Activated naive CD4-positive, alpha-beta T cell treated with anti-CD3 and anti-CD28 coated beads for 36 hours (primary cell): ENCODE measurements at regions of chr12 and their contacts with region 1.

Region 1: GRCh38 chr12:45130881-45131281 is 80.0 kb upstream of the DBX2 start:
- DNase-seq: peak; percentile 72
- H3K4me3 Mint-ChIP-seq: no peak overlapping the region
- H3K27ac Mint-ChIP-seq: no peak overlapping the region
- H3K4me1 Mint-ChIP-seq: no peaks in the 10 kb centered on the region
- H3K27me3 Mint-ChIP-seq: peaks cover 10% of the 10 kb centered on the region

Region 2: DNA sequence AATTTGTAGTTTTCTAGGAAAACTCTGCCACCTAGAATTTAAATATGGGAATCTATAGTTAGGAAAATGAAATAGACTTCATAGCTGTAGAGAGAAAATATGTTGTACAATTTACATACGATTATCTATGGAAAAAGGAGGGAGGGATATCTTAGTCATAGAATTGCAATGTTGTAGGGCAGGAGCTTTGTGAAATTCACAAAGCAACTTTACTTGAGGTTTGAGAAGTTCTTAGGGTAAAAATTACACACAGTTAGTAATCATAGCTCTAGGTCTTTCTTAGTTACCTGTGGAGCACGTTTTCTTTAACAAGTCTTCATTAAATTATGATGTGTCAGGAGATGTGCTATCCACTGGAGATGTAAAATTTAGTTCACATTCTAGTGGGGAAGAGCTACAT is 18.6 kb before region 1 on chr12:
- CTCF ChIA-PET with region 1: no interaction called
- intact Hi-C with region 1: no loop called
- DNase-seq: no peak
- H3K4me3 Mint-ChIP-seq: no peak overlapping the region
- H3K27ac Mint-ChIP-seq: no peak overlapping the region
- H3K4me1 Mint-ChIP-seq: no peaks in the 10 kb centered on the region
- H3K27me3 Mint-ChIP-seq: peaks cover 8% of the 10 kb centered on the region

Region 3: GRCh38 chr12:45183246-45183645 is 52.4 kb after region 1 on chr12:
- CTCF ChIA-PET with region 1: no interaction called
- intact Hi-C with region 1: no loop called
- DNase-seq: no peak
- H3K4me3 Mint-ChIP-seq: no peak overlapping the region
- H3K27ac Mint-ChIP-seq: no peak overlapping the region
- H3K4me1 Mint-ChIP-seq: no peaks in the 10 kb centered on the region
- H3K27me3 Mint-ChIP-seq: no peaks in the 10 kb centered on the region

Region 4: DNA sequence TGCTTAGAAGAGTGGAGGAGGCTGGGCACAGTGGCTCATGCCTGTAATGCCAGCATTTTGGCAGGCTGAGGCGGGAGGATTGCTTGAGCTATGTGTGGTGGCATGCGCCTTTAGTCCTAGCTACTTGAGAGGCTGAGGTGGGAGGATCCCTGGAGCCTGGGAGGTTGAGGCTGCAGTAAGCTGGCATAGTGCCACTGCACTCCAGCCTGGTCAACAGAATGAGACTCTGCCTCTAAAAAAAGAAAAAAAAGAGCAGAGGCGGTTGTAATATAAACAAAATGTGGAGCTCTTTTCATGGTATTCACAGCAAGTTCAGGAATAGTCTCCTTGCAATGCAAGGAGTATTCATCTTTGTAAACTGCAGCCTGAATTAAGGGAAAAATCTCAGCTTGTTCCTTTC is 625.8 kb after region 1 on chr12:
- CTCF ChIA-PET with region 1: no interaction called
- intact Hi-C with region 1: loop called (anchors 5 kb)
- DNase-seq: no peak
- H3K4me3 Mint-ChIP-seq: no peak overlapping the region
- H3K27ac Mint-ChIP-seq: no peak overlapping the region
- H3K4me1 Mint-ChIP-seq: peaks cover 41% of the 10 kb centered on the region
- H3K27me3 Mint-ChIP-seq: no peaks in the 10 kb centered on the region